ENCODE measurements at regions of chr4 and their contacts with region 1.

Region 1: DNA sequence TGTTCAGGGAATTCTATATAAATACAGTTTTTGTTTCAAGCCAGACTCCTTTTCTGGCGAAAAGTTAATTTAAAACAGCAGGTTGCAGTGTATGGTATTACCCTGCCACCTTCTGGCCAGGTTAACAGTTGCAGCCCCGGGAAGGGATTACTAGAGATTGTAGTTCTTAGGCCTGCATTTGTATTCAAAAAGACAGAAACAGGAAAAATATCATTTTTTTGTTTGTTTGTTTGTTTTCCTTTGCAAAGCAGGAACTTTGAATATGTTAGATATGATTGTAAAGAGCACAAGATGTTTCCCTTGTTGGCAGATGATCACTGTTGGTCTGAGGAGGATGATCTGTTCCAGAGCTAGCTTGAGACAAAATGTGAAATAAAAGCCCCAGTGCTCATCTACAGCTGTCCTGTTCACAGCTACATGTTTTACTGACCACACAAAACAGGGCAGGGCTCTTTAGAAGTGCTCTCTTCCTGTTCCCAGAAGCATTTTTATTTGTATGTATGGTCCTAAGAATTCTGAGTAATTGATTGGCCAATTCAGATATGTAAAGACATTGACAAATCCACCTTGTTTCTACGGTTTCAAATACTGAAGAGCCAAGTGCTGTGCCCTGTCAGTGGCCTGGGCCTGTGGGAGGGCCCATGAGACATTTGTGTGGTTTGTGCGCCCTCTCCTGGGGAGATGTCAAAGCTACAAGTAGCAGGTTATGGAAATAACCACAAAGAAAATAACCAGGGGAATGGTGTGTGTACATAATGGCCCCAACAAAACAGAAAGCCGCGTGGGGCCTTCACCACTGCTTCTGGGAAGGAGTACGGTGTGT is 57.9 kb downstream of the CLDN22 start:
- DNase-seq: peak; percentile 38 to 89
- H3K4me3 ChIP-seq: no peak overlapping the region
- H3K27ac ChIP-seq: no peak overlapping the region
- H3K4me1 ChIP-seq: peaks cover 0 to 11% (median 2%) of the 10 kb centered on the region in 4 experiments; a peak in 3 of 7 replicates
- H3K27me3 ChIP-seq: no peaks in the 10 kb centered on the region
- CTCF ChIP-seq: peak; percentile 64 to 90 (median 86)
- EP300 ChIP-seq: no peak
- POLR2A ChIP-seq: no peak
- RAD21 ChIP-seq: peak; percentile 88 to 93

Region 2: DNA sequence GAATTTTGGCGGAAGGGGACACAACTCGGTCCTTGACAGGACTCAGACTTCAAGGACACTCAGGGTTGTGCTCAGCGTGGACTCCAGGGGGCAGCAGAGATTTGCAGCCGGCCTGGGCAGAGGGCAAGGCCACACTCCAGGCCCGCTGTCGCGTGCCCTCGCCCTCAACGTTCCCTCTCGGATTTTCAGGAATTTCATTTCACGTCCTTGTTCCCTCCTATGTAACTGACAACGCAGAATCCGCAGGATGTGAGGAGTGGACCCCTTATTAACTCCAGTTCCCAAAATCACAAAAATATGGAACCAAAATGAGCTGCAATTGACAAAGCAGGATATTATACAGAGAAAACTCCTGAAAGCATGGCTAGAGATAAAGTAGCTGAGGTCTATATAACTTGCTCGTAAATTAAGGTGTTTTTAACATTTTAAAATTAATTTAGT is 323.9 kb before region 1 on chr4:
- CTCF ChIA-PET with region 1: interaction called, 50 read pairs
- POLR2A ChIA-PET with region 1: no interaction called
- DNase-seq: peak in 1 of 2 experiments; percentile 89
- H3K4me3 ChIP-seq: no peak overlapping the region
- H3K27ac ChIP-seq: no peak overlapping the region
- H3K4me1 ChIP-seq: peaks cover 0 to 4% (median 1%) of the 10 kb centered on the region in 4 experiments; a peak in 3 of 7 replicates
- H3K27me3 ChIP-seq: no peaks in the 10 kb centered on the region
- CTCF ChIP-seq: peak; percentile 88 to 97 (median 96)
- EP300 ChIP-seq: no peak
- POLR2A ChIP-seq: no peak
- RAD21 ChIP-seq: peak; percentile 93 to 96

Region 3: DNA sequence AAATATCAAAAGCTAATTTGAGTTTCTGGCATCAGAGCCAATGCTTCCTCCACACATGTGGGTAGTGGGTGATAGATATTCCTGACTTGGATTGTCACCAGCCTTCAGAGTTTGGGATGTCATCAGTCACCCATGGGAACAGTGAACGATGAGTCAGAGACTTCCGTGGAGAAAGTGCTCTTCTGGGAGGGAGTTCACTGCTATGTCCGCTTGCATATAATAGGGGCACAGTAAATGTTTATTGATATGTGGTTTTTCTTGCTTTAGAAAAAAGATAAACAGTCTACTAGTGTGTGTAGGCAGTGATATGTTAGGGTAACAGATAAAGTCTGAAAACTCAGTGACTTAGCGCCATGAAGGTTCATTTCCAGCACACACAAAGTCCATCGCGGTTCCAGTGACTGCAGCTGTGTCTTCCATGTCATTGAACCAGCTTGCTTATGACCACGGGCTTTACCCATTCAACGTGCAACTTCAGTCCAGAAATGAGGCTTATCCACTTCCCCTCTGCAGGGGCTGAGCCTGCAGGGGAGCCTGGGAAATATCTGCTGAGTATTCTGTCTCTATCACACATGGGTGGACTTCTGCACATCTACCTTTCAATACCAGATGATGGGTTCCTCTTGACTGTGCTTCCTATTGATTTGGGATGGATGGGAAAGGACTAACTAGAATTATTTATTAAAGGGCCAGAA is 250.8 kb before region 1 on chr4:
- CTCF ChIA-PET with region 1: interaction called, 69 read pairs
- POLR2A ChIA-PET with region 1: no interaction called
- DNase-seq: peak in 1 of 2 experiments; percentile 13
- H3K4me3 ChIP-seq: no peak overlapping the region
- H3K27ac ChIP-seq: no peak overlapping the region
- H3K4me1 ChIP-seq: peaks cover 0 to 4% (median 2%) of the 10 kb centered on the region in 4 experiments; a peak in 2 of 7 replicates
- H3K27me3 ChIP-seq: peaks cover 0 to 2% (median 0%) of the 10 kb centered on the region in 4 experiments; a peak in 3 of 7 replicates
- CTCF ChIP-seq: no peak
- EP300 ChIP-seq: no peak
- POLR2A ChIP-seq: no peak
- RAD21 ChIP-seq: no peak

Region 4: DNA sequence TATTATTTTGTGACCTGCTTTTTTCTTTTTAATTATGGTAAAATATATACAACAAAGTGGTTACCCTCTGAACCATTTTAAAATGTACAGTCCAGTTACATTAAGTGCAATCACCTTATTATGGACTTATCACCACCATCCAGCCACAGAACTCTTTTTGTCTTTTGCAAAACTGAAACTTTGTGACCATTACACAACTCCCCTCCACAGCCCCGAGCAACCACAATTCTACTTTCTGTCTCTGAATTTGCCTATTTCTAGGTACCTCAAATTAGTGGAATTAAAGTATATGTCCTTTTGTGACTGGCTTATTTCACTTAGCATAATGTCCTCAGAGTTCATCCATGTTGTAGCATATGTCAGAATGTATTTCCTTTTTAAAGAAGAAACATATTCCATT is 202.4 kb before region 1 on chr4:
- CTCF ChIA-PET with region 1: interaction called, 13 read pairs
- POLR2A ChIA-PET with region 1: no interaction called
- DNase-seq: no peak
- H3K4me3 ChIP-seq: no peak overlapping the region
- H3K27ac ChIP-seq: no peak overlapping the region
- H3K4me1 ChIP-seq: no peaks in the 10 kb centered on the region
- H3K27me3 ChIP-seq: no peaks in the 10 kb centered on the region
- CTCF ChIP-seq: no peak
- EP300 ChIP-seq: no peak
- POLR2A ChIP-seq: no peak
- RAD21 ChIP-seq: no peak

Region 5: DNA sequence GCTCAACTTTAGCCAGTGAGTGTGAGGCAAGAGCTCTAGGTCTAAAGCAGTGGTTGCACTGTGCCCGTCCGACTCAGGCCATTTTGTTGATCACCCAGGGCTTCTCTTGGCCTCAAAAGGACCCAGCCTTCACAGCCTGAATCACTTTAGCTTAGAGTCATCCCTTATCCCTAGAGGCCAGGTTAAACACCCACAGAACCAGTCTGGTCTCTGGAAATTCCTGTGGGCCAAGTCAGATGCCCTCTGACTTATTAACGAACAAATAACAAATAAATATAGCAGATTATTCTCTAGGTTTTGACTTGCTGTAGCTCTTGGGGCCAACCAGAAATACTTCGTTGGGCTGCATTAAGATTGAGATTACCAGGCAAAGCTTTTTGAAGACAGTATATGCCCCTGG is 60.8 kb before region 1 on chr4:
- CTCF ChIA-PET with region 1: no interaction called
- POLR2A ChIA-PET with region 1: no interaction called
- DNase-seq: no peak
- H3K4me3 ChIP-seq: no peak overlapping the region
- H3K27ac ChIP-seq: no peak overlapping the region
- H3K4me1 ChIP-seq: no peaks in the 10 kb centered on the region; a peak in 1 of 7 replicates
- H3K27me3 ChIP-seq: no peaks in the 10 kb centered on the region
- CTCF ChIP-seq: no peak
- EP300 ChIP-seq: no peak
- POLR2A ChIP-seq: no peak
- RAD21 ChIP-seq: no peak

Region 6: GRCh38 chr4:183249857-183250256 is 12.3 kb before region 1 on chr4:
- CTCF ChIA-PET with region 1: interaction called, 28 read pairs
- POLR2A ChIA-PET with region 1: no interaction called
- DNase-seq: no peak
- H3K4me3 ChIP-seq: no peak overlapping the region
- H3K27ac ChIP-seq: no peak overlapping the region
- H3K4me1 ChIP-seq: no peaks in the 10 kb centered on the region
- H3K27me3 ChIP-seq: no peaks in the 10 kb centered on the region
- CTCF ChIP-seq: peak in 2 of 3 experiments; percentile 36 to 50; a peak in 2 of 4 replicates
- EP300 ChIP-seq: no peak
- POLR2A ChIP-seq: no peak
- RAD21 ChIP-seq: peak; percentile 74 to 76

Region 7: GRCh38 chr4:183376396-183376795 is 114.2 kb after region 1 on chr4:
- CTCF ChIA-PET with region 1: no interaction called
- POLR2A ChIA-PET with region 1: no interaction called
- DNase-seq: no peak
- H3K4me3 ChIP-seq: no peak overlapping the region
- H3K27ac ChIP-seq: no peak overlapping the region
- H3K4me1 ChIP-seq: no peaks in the 10 kb centered on the region
- H3K27me3 ChIP-seq: no peaks in the 10 kb centered on the region
- CTCF ChIP-seq: no peak
- EP300 ChIP-seq: no peak
- POLR2A ChIP-seq: no peak
- RAD21 ChIP-seq: no peak

Region 8: GRCh38 chr4:183407128-183407585 is 145.0 kb after region 1 on chr4:
- CTCF ChIA-PET with region 1: interaction called, 10 read pairs
- POLR2A ChIA-PET with region 1: no interaction called
- DNase-seq: peak; percentile 59 to 99
- H3K4me3 ChIP-seq: peak overlapping the region; percentile 24 to 51 (median 38); a peak in 7 of 8 replicates
- H3K27ac ChIP-seq: no peak overlapping the region
- H3K4me1 ChIP-seq: no peaks in the 10 kb centered on the region
- H3K27me3 ChIP-seq: no peaks in the 10 kb centered on the region
- CTCF ChIP-seq: peak; percentile 86 to 94 (median 88)
- EP300 ChIP-seq: peak in 1 of 2 experiments; percentile 45; a peak in 1 of 3 replicates
- POLR2A ChIP-seq: peak; percentile 38 to 78
- RAD21 ChIP-seq: peak; percentile 87 to 95

Measured in H1 (cell line).